Activated T-helper 1 cell treated with anti-CD3 and anti-CD28 coated beads, Interleukin-12 subunit alpha, Interleukin-12 subunit beta, Interleukin-2, Interleukin-4 antibody, amounts not matched to agents 30 ng/mL and 10 ng/mL and 1 ng/mL, durations not matched to agents 14 hours and 24 hours and 36 hours (primary cell): ENCODE measurements at regions of chr5 and their contacts with region 1.

Region 1: GRCh38 chr5:142800776-142801494 is 30.8 kb downstream of the ARHGAP26 start:
- DNase-seq: peak; percentile 53
- H3K4me3 Mint-ChIP-seq: peak overlapping the region; percentile 73
- H3K27ac Mint-ChIP-seq: peak overlapping the region; percentile 93
- H3K4me1 Mint-ChIP-seq: peaks cover 67% of the 10 kb centered on the region
- H3K27me3 Mint-ChIP-seq: no peaks in the 10 kb centered on the region

Region 2: GRCh38 chr5:142694092-142694856 is 106.7 kb before region 1 on chr5:
- intact Hi-C with region 1: no loop called
- DNase-seq: no peak
- H3K4me3 Mint-ChIP-seq: no peak overlapping the region
- H3K27ac Mint-ChIP-seq: no peak overlapping the region
- H3K4me1 Mint-ChIP-seq: no peaks in the 10 kb centered on the region
- H3K27me3 Mint-ChIP-seq: peaks cover 6% of the 10 kb centered on the region

Region 3: DNA sequence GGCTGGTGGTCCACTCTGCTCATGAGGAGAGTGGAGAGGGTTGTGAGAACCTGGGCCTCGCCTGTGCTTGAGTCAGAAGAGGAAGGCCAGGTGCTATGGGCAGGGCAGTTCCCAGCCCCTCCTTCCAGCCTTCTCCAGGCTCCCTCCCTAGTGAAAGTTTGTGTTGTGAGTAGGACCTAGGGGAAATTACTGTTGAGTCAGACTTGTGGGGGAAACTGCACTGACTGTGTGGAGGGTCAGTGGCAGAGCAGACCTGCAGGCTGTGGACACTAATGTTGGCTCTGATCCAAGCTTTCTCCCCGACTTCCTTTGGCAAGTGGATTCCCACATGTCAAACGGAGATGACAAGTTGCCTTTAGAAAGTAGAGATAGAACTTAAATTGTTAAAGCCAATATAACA is 71.9 kb after region 1 on chr5:
- intact Hi-C with region 1: loop called (anchors 1 kb)
- DNase-seq: no peak
- H3K4me3 Mint-ChIP-seq: no peak overlapping the region
- H3K27ac Mint-ChIP-seq: no peak overlapping the region
- H3K4me1 Mint-ChIP-seq: peaks cover 13% of the 10 kb centered on the region
- H3K27me3 Mint-ChIP-seq: peaks cover 3% of the 10 kb centered on the region